Thyroid gland (tissue), 4 donors: ENCODE measurements at regions of chr5 and their contacts with region 1.

Region 1: DNA sequence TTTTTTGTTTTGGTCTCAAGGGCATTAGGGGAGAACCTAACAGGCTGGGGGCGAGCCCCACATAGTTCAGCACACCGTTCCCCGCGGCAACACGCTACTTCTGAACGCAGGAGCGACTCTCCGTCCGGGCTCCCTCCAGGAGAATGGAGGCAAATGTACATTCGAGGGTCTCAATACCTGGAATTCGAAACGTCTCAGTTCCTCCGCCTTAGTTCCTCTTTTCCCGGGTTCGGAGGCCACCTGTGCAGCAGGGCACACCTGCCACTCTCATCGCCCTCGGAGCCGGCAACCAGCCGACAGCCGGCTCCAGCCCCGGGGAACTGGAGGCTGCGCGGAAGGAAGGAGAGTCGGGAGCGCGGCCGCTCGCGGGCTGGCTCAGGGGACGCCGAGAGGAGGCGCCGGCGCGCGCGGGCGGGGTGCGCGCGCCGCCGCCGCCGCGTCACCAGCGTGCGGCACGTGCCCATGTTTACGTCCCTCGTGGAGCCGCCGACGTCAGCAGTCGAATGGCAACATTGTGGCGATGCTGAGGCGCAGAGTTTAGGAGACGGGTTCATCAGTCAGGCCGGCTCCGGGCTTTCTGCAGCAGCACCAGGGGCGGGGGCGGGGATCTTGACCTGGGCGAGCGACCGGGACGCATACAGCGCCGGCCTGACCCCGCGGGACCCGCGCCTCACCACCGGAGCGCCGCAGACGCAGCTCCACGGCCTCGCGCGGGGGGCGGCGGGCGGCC is at the start of gene JMY:
- DNase-seq: peak; percentile 88 to 89
- H3K4me3 ChIP-seq: peak within 1 kb of the TSS; percentile 54 to 96 (median 93)
- H3K27ac ChIP-seq: peak within 1 kb of the TSS; percentile 89 to 99 (median 99)
- H3K4me1 ChIP-seq: peaks cover 14% of the 10 kb centered on the region in 2 donors
- H3K27me3 ChIP-seq: no peaks in the 10 kb centered on the region
- CTCF ChIP-seq: peak in 2 of 6 experiments; percentile 22 to 33
- POLR2A ChIP-seq: peak; percentile 82 to 98
- total RNA-seq, gene JMY: 29.7 to 48.5 (median 30.9) TPM

Region 2: GRCh38 chr5:79297661-79298060 is 61.9 kb after region 1 on chr5:
- intact Hi-C with region 1: loop called (anchors 10 kb)
- DNase-seq: peak; percentile 71 to 78
- H3K4me3 ChIP-seq: no peak overlapping the region
- H3K27ac ChIP-seq: peak overlapping the region; percentile 72 to 84 (median 78)
- H3K4me1 ChIP-seq: peaks cover 32 to 34% of the 10 kb centered on the region in 2 donors
- H3K27me3 ChIP-seq: no peaks in the 10 kb centered on the region
- CTCF ChIP-seq: no peak
- POLR2A ChIP-seq: peak in 1 of 2 donors; percentile 56

Region 3: GRCh38 chr5:79518718-79519117 is 282.9 kb after region 1 on chr5:
- intact Hi-C with region 1: no loop called
- DNase-seq: no peak
- H3K4me3 ChIP-seq: no peak overlapping the region
- H3K27ac ChIP-seq: peak overlapping the region; percentile 33 to 94 (median 79)
- H3K4me1 ChIP-seq: peaks cover 20 to 37% of the 10 kb centered on the region in 2 donors
- H3K27me3 ChIP-seq: no peaks in the 10 kb centered on the region
- CTCF ChIP-seq: no peak
- POLR2A ChIP-seq: no peak